Naive thymus-derived CD4-positive, alpha-beta T cell (primary cell): ENCODE measurements at regions of chr6 and their contacts with region 1.

Region 1: GRCh38 chr6:33118525-33119123 is 42.8 kb downstream of the HLA-DPB1 start:
- DNase-seq: peak in 7 of 9 donors; percentile 44 to 75 (median 65)
- ATAC-seq: peak; percentile 85
- H3K4me3 ChIP-seq: no peak overlapping the region
- H3K4me3 Mint-ChIP-seq: peak overlapping the region in 1 of 10 donors; percentile 12
- H3K27ac ChIP-seq: no peak overlapping the region
- H3K27ac Mint-ChIP-seq: no peak overlapping the region
- H3K4me1 ChIP-seq: peaks cover 0 to 4% of the 10 kb centered on the region in 2 donors
- H3K4me1 Mint-ChIP-seq: peaks cover 4 to 21% (median 13%) of the 10 kb centered on the region in 7 donors
- H3K27me3 ChIP-seq: peaks cover 0 to 12% of the 10 kb centered on the region in 2 donors
- H3K27me3 Mint-ChIP-seq: peaks cover 40 to 79% (median 45%) of the 10 kb centered on the region in 5 donors

Region 2: GRCh38 chr6:33147807-33148666 is 29.4 kb after region 1 on chr6:
- CTCF ChIA-PET with region 1: interaction called, 4 read pairs
- POLR2A ChIA-PET with region 1: no interaction called
- intact Hi-C with region 1: loop called (anchors 1 to 2 kb)
- DNase-seq: peak in 2 of 9 donors; percentile 17 to 19
- ATAC-seq: no peak
- H3K4me3 ChIP-seq: no peak overlapping the region
- H3K4me3 Mint-ChIP-seq: no peak overlapping the region
- H3K27ac ChIP-seq: no peak overlapping the region
- H3K27ac Mint-ChIP-seq: no peak overlapping the region
- H3K4me1 ChIP-seq: no peaks in the 10 kb centered on the region
- H3K4me1 Mint-ChIP-seq: peaks cover 0 to 5% (median 0%) of the 10 kb centered on the region in 7 donors
- H3K27me3 ChIP-seq: peaks cover 0 to 4% of the 10 kb centered on the region in 2 donors
- H3K27me3 Mint-ChIP-seq: peaks cover 7 to 33% (median 20%) of the 10 kb centered on the region in 5 donors

Region 3: GRCh38 chr6:33161354-33162331 is 43.0 kb after region 1 on chr6:
- CTCF ChIA-PET with region 1: no interaction called
- POLR2A ChIA-PET with region 1: no interaction called
- intact Hi-C with region 1: loop called in 1 of 2 experiments (anchors 5 kb)
- DNase-seq: peak; percentile 64 to 89 (median 79)
- ATAC-seq: peak; percentile 97
- H3K4me3 ChIP-seq: peak overlapping the region; percentile 51
- H3K4me3 Mint-ChIP-seq: peak overlapping the region; percentile 76 to 90 (median 85)
- H3K27ac ChIP-seq: no peak overlapping the region
- H3K27ac Mint-ChIP-seq: peak overlapping the region in 6 of 9 donors; percentile 26 to 82 (median 58)
- H3K4me1 ChIP-seq: no peaks in the 10 kb centered on the region
- H3K4me1 Mint-ChIP-seq: peaks cover 8 to 16% (median 10%) of the 10 kb centered on the region in 7 donors
- H3K27me3 ChIP-seq: no peaks in the 10 kb centered on the region
- H3K27me3 Mint-ChIP-seq: peaks cover 0 to 5% (median 0%) of the 10 kb centered on the region in 5 donors

Region 4: GRCh38 chr6:33172688-33173534 is 54.3 kb after region 1 on chr6:
- CTCF ChIA-PET with region 1: no interaction called
- POLR2A ChIA-PET with region 1: no interaction called
- intact Hi-C with region 1: loop called in 1 of 2 experiments (anchors 1 kb)
- DNase-seq: peak in 1 of 9 donors; percentile 10
- ATAC-seq: no peak
- H3K4me3 ChIP-seq: no peak overlapping the region
- H3K4me3 Mint-ChIP-seq: no peak overlapping the region
- H3K27ac ChIP-seq: no peak overlapping the region
- H3K27ac Mint-ChIP-seq: no peak overlapping the region
- H3K4me1 ChIP-seq: no peaks in the 10 kb centered on the region
- H3K4me1 Mint-ChIP-seq: no peaks in the 10 kb centered on the region
- H3K27me3 ChIP-seq: no peaks in the 10 kb centered on the region
- H3K27me3 Mint-ChIP-seq: no peaks in the 10 kb centered on the region